Activated T-helper 2 cell treated with anti-CD3 and anti-CD28 coated beads, Interferon-gamma antibody, Interleukin-2, Interleukin-4, amounts not matched to agents 10 μg/mL and 5 μg/mL and 100 μg/mL, durations not matched to agents 14 hours and 24 hours and 36 hours (primary cell): ENCODE measurements at regions of chr9 and their contacts with region 1.

Region 1: DNA sequence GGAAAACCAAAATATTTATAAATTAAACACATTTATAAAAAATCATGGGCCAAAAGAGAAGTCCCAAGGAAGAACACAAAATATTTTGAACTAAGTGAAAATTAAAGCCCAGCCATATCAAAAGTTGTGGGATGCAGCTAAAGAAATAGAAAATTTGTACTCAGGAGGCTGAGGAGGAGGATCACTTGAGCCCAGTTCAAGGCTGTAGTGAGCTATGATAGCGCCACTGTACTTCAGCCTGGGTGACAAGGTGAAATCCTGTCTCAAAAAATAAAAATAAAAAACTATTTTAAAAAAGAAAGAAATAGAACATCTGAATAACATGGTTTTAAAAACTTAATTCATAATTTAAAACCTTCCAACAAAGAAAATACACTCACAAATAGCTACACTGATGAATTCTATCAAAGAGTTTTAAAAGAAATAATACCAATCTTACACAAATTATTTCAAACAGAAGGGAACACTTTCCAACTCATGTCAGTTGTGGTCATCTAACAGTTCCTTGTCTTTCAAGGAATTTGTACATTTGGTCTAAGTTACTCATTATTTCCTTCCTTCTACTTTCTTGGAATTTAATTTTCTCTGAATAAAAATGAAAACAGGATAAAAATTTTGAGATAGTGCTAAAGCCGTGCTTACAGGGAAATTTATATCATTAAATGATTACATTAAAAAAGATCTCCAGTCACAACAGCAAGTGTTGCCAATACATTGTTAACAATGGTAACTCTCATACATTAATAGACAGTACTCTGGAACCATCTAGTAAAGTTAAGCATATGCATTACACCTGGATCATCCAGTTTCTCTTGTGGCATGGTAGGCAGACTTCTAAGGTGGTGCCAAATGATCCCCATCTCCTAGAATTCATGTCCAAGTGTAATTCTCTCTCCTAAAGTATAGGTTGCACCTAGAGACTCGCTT is 17.8 kb downstream of the PTBP3 start:
- DNase-seq: no peak
- H3K4me3 Mint-ChIP-seq: peak overlapping the region; percentile 23
- H3K27ac Mint-ChIP-seq: peak overlapping the region; percentile 81
- H3K4me1 Mint-ChIP-seq: peaks cover 51% of the 10 kb centered on the region
- H3K27me3 Mint-ChIP-seq: no peaks in the 10 kb centered on the region

Region 2: DNA sequence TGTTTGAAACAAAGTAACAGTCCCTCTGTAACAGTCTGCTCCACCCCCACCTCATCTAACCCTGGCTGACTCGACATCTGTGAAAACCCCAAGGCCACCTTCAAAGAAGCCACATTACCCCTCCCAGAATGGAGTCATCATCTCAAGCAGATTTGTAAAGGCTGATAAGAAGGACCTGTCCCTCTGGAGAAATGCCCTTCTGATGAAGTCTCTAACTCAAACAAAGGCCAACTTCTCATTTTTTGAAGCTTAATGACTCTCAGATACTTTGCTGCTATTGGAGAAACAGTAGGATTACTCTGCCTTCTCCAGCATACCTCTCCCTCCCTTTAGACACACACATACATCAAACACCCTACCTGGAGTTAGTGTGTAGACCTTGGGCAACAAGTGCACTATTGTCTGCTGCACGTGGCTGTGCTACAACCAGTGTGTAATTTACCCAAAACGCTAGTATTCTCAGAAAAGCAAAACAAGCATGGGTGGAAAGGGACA is 135.2 kb before region 1 on chr9:
- intact Hi-C with region 1: loop called (anchors 5 kb)
- DNase-seq: peak; percentile 55
- H3K4me3 Mint-ChIP-seq: peak overlapping the region; percentile 11
- H3K27ac Mint-ChIP-seq: peak overlapping the region; percentile 61
- H3K4me1 Mint-ChIP-seq: peaks cover 50% of the 10 kb centered on the region
- H3K27me3 Mint-ChIP-seq: peaks cover 2% of the 10 kb centered on the region

Region 3: GRCh38 chr9:112283582-112284253 is 31.9 kb before region 1 on chr9:
- intact Hi-C with region 1: loop called (anchors 5 kb)
- DNase-seq: no peak
- H3K4me3 Mint-ChIP-seq: no peak overlapping the region
- H3K27ac Mint-ChIP-seq: no peak overlapping the region
- H3K4me1 Mint-ChIP-seq: peaks cover 7% of the 10 kb centered on the region
- H3K27me3 Mint-ChIP-seq: no peaks in the 10 kb centered on the region

Region 4: DNA sequence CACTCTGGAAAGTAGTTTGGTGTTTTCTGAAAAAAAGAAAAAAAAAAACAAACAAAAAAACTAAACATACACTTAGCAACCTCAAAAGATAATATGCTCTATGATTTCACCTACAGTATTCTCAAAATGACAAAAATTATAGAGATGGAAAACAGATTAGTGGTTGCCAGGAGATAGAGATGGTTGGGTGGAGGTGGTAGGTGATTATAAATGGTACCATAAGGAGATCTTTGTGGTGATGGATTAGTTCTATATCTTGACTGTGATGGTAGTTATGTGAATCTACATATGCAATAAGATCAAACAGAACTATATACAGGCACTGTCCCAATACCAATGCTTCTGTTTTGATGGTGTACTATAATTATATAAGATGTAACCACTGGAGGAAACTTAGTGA is 14.2 kb before region 1 on chr9:
- intact Hi-C with region 1: loop called (anchors 1 kb)
- DNase-seq: no peak
- H3K4me3 Mint-ChIP-seq: no peak overlapping the region
- H3K27ac Mint-ChIP-seq: peak overlapping the region; percentile 3
- H3K4me1 Mint-ChIP-seq: peaks cover 23% of the 10 kb centered on the region
- H3K27me3 Mint-ChIP-seq: no peaks in the 10 kb centered on the region

Region 5: DNA sequence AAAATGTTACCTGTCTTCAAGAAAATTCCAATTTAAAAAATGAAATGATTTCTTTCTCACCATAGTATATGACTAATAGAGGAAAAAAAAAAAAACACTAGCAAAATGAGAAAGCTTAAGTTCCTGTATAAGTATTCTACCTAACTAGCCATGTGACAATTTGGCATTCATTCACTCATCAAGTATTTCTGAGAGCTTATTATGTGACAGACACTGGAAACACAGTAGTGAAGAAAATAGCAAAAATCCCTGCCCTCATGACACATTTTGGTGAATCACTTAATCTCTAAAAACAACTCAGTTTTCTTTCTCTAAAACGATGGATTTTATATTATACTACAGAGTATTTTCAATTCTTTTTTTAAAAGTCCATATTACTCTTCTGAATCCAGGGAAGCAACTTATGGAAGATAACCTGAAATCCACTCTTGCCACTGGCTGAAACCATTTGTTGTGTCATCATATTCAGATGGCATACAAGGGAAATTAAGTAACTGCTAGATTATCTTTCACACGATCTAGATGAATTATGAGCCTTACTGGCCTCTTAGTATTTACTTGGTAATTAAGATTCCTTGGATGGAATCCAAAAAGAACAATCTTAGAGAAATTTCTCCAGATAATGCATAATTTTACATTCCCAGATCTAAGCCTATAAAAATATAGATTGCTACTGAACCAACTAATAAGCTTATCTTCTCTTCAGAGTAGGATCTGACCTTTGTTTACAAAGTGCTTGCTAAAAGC is 12.3 kb after region 1 on chr9:
- intact Hi-C with region 1: loop called (anchors 1 kb)
- DNase-seq: no peak
- H3K4me3 Mint-ChIP-seq: no peak overlapping the region
- H3K27ac Mint-ChIP-seq: peak overlapping the region; percentile 42
- H3K4me1 Mint-ChIP-seq: peaks cover 58% of the 10 kb centered on the region
- H3K27me3 Mint-ChIP-seq: no peaks in the 10 kb centered on the region